Activated CD4-positive, alpha-beta memory T cell treated with anti-CD3 and anti-CD28 coated beads for 36 hours (primary cell): ENCODE measurements at regions of chr6 and their contacts with region 1.

Region 1: GRCh38 chr6:27864906-27865849 is 47.0 kb downstream of the OR2B2 start:
- DNase-seq: peak; percentile 85
- H3K4me3 Mint-ChIP-seq: peak overlapping the region; percentile 96
- H3K27ac Mint-ChIP-seq: peak overlapping the region; percentile 100
- H3K4me1 Mint-ChIP-seq: peaks cover 38% of the 10 kb centered on the region
- H3K27me3 Mint-ChIP-seq: peaks cover 20% of the 10 kb centered on the region

Region 2: DNA sequence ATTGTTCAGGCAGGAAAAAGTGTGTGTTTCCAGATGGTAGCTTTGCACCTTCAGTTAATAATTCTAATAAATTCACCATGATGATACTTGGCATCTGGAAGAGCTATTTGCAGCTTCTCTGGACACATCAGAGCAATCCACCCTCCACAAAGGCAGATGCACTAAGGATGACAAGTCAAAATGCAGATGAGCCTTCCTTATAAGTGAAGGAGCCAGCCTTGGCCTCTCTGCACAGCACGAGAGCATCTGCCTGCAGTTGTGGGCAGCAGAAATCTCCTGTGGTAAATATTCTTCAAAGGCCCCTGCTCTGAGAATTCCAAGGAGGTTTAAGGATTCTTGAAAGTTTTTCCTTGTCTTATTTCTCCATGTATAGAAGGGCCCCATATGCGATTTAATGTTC is 546.2 kb before region 1 on chr6:
- CTCF ChIA-PET with region 1: no interaction called
- POLR2A ChIA-PET with region 1: no interaction called
- intact Hi-C with region 1: no loop called
- DNase-seq: no peak
- H3K4me3 Mint-ChIP-seq: no peak overlapping the region
- H3K27ac Mint-ChIP-seq: no peak overlapping the region
- H3K4me1 Mint-ChIP-seq: no peaks in the 10 kb centered on the region
- H3K27me3 Mint-ChIP-seq: peaks cover 12% of the 10 kb centered on the region

Region 3: DNA sequence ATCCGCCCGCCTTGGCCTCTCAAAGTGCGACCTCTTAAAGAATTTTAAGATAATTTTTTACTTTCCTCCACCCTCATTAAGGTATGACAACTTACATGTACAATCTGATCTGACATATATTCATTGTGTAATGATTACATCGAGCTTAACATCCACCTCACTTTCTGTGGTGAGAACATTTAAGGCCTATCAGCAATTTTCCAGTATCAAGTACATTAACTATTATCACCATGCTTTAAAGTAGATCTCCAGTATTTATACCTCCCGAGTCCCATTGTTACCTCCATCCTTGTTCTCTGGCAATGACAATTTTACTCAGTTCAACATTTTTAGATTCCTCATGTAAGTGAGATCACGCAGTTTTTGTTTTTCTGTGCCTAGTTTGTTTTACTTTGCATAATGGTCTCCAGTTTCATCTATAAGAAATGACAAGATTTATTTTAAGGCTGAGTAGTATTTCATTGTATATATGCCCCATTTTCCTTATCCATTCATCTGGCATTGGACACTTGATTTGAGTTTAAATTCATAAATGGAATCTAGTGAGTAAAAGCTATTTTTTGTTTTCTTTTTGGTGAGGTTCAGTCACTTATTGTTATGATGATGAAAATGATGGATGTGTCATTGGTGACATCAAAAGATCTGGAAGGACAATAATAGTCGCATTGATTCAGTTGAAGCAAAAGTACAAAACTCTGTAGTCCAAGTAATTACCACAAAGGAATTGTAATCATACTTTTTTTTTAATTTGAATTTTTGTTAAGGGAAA is 40.0 kb before region 1 on chr6:
- CTCF ChIA-PET with region 1: interaction called, 4 read pairs
- POLR2A ChIA-PET with region 1: interaction called, 102 read pairs
- intact Hi-C with region 1: loop called (anchors 1 kb)
- DNase-seq: no peak
- H3K4me3 Mint-ChIP-seq: peak overlapping the region; percentile 87
- H3K27ac Mint-ChIP-seq: peak overlapping the region; percentile 98
- H3K4me1 Mint-ChIP-seq: peaks cover 32% of the 10 kb centered on the region
- H3K27me3 Mint-ChIP-seq: no peaks in the 10 kb centered on the region

Region 4: GRCh38 chr6:27851440-27851839 is 13.7 kb before region 1 on chr6:
- CTCF ChIA-PET with region 1: no interaction called
- POLR2A ChIA-PET with region 1: interaction called, 13 read pairs
- intact Hi-C with region 1: no loop called
- DNase-seq: no peak
- H3K4me3 Mint-ChIP-seq: no peak overlapping the region
- H3K27ac Mint-ChIP-seq: no peak overlapping the region
- H3K4me1 Mint-ChIP-seq: no peaks in the 10 kb centered on the region
- H3K27me3 Mint-ChIP-seq: no peaks in the 10 kb centered on the region

Region 5: GRCh38 chr6:27922949-27923348 is 57.8 kb after region 1 on chr6:
- CTCF ChIA-PET with region 1: no interaction called
- POLR2A ChIA-PET with region 1: no interaction called
- intact Hi-C with region 1: no loop called
- DNase-seq: no peak
- H3K4me3 Mint-ChIP-seq: no peak overlapping the region
- H3K27ac Mint-ChIP-seq: no peak overlapping the region
- H3K4me1 Mint-ChIP-seq: no peaks in the 10 kb centered on the region
- H3K27me3 Mint-ChIP-seq: peaks cover 19% of the 10 kb centered on the region

Region 6: GRCh38 chr6:28001351-28002135 is 136.4 kb after region 1 on chr6:
- CTCF ChIA-PET with region 1: no interaction called
- POLR2A ChIA-PET with region 1: no interaction called
- intact Hi-C with region 1: no loop called
- DNase-seq: no peak
- H3K4me3 Mint-ChIP-seq: no peak overlapping the region
- H3K27ac Mint-ChIP-seq: no peak overlapping the region
- H3K4me1 Mint-ChIP-seq: no peaks in the 10 kb centered on the region
- H3K27me3 Mint-ChIP-seq: peaks cover 11% of the 10 kb centered on the region

Region 7: GRCh38 chr6:28090917-28091586 is 225.9 kb after region 1 on chr6:
- CTCF ChIA-PET with region 1: no interaction called
- POLR2A ChIA-PET with region 1: no interaction called
- intact Hi-C with region 1: no loop called
- DNase-seq: no peak
- H3K4me3 Mint-ChIP-seq: peak overlapping the region; percentile 17
- H3K27ac Mint-ChIP-seq: no peak overlapping the region
- H3K4me1 Mint-ChIP-seq: no peaks in the 10 kb centered on the region
- H3K27me3 Mint-ChIP-seq: peaks cover 15% of the 10 kb centered on the region